OCI-LY7 (cell line): ENCODE measurements at regions of chr13 and their contacts with region 1.

Region 1: DNA sequence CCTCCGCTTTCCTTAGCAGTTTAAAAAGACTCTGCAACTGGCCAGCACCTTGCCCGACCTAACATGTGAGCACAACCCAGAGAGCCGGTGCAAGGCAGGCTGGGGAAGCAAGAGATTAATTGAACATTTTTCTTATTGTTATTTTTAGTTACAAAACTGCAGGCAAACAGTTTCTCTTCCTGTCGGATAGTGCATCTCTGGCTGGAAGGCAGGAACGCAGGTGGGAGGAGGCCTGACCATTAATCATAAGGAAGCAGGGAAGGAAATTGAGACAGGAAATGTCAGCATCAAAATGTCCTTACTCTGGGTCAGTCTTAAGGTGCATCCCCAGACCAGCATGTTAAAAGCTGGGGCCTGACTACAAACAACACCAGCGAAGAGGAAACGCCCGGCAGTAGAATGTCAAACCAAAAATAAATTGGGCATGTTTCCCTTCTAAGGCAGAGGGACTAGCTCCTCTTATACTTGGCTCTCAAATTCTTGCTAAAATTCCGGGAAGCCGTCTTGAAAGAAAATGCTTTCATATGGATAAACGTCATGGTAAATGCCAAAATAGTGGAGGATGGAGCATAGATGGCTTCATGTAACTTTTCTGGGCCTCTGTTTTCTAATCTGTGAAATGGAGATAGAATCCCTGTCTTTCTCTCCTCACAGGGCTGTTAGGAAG is 226.8 kb downstream of the RAP2A start:
- DNase-seq: no peak
- H3K4me3 ChIP-seq: no peak overlapping the region
- H3K27ac ChIP-seq: no peak overlapping the region
- H3K4me1 ChIP-seq: no peaks in the 10 kb centered on the region
- CTCF ChIP-seq: no peak

Region 2: GRCh38 chr13:97133959-97134358 is 526.8 kb before region 1 on chr13:
- CTCF ChIA-PET with region 1: no interaction called
- POLR2A ChIA-PET with region 1: interaction called, 10 read pairs
- intact Hi-C with region 1: no loop called
- DNase-seq: no peak
- H3K4me3 ChIP-seq: no peak overlapping the region
- H3K27ac ChIP-seq: no peak overlapping the region
- H3K4me1 ChIP-seq: no peaks in the 10 kb centered on the region
- CTCF ChIP-seq: no peak